ENCODE measurements at regions of chr17 and their contacts with region 1.

Region 1: DNA sequence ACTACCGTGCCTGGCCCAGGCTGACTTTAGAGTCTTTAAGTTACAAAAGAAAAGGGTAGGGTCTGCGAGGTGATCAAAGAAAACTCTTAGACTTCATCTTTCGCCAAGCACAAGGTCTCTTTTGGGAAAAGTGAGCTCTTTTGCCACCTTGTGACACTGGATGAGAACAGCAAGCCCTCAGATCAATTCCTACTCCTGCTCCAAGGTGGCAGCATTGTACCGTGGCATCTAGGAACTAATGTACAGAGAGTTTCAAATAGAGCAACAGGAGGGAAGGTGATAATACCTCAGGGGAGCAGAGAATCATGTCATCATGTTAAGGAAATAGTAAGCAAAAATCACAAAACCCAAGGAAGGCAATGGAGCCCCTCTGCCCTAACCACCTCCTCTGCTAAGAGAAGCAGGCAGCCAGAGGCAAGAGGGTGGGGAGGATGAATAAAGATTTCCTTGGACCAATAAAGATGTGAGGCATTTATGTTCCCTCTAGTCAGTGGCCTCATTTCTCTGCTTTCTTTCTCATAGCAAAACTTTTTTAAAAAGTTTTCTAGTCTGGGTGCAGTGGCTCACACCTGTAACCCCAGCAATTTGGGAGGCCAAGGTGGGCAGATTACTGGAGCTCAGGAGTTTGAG is 2.1 kb upstream of the C17orf78 start:
- DNase-seq: peak; percentile 66 to 67
- H3K4me3 ChIP-seq: no peak overlapping the region
- H3K27ac ChIP-seq: no peak overlapping the region
- H3K4me1 ChIP-seq: no peaks in the 10 kb centered on the region; a peak in 1 of 7 replicates
- H3K27me3 ChIP-seq: no peaks in the 10 kb centered on the region
- CTCF ChIP-seq: peak; percentile 69 to 100 (median 100)
- EP300 ChIP-seq: no peak
- POLR2A ChIP-seq: no peak
- RAD21 ChIP-seq: peak; percentile 99

Region 2: DNA sequence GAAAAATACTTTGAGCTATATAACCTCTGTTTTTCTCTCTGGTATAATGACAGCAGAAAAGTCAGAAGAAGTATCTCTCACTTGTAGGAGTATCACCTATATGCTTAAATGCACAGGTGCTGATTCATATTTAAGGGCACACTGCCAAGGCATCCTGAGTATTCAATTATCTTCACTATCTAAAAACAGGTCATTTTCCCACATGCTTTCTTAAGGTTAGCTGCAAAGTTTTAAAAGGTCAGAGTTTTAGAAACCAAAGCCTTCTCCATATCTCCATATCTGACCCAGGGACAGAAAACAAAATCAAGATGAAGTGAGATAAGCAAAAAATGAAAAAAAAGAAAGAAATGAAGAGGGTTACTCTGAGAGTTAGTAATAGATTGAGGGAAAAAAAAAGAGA is 97.1 kb before region 1 on chr17:
- CTCF ChIA-PET with region 1: interaction called, 10 read pairs
- POLR2A ChIA-PET with region 1: no interaction called
- DNase-seq: no peak
- H3K4me3 ChIP-seq: no peak overlapping the region
- H3K27ac ChIP-seq: no peak overlapping the region
- H3K4me1 ChIP-seq: no peaks in the 10 kb centered on the region
- H3K27me3 ChIP-seq: no peaks in the 10 kb centered on the region
- CTCF ChIP-seq: no peak
- EP300 ChIP-seq: no peak
- POLR2A ChIP-seq: no peak
- RAD21 ChIP-seq: no peak

Region 3: DNA sequence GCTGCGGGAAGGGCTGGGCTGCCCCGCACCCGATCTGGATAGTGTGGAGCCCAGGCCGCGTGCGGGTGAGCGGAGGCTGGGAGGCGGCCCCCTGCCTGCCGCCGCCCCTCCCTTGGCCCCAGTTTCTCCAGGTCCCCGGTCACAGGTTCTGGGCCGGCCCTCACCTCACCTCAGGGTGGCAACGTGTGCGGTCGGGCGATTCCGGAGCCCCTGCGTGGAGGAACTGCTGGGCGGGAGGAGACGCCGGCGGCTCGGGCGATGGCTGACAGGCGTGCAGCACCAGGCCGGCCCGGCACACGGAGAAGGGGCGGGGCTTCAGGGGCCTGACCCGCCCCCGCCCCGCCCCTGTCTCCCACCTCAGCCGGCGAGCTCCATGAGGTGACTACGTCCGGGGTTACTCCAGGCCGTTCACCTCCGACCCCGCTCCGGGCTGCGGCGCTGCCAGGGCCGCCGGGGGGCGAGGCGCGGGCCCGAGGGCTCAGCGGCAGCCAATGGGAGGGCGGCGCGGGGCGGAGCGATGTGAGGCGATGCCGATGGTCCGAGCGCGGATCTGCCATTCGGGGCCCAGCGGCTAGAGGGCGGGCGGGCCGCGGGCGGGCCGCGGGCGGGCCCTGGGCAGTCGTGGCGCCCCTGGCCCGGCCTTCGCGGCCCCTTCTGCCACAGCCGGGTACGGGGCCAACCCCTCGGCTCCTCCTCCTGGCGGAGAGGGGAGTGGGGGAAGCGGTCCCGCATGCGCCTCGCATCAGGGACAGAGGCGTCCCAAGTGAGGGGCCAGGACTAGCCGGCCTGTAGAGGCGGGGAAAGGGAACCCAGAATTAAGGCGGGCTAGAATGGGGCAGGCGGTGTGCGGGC is 14.6 kb before region 1 on chr17:
- CTCF ChIA-PET with region 1: interaction called, 21 read pairs
- POLR2A ChIA-PET with region 1: interaction called, 15 read pairs
- DNase-seq: peak; percentile 96
- H3K4me3 ChIP-seq: peak overlapping the region; percentile 83 to 95 (median 88)
- H3K27ac ChIP-seq: peak overlapping the region; percentile 69
- H3K4me1 ChIP-seq: peaks cover 0 to 12% (median 7%) of the 10 kb centered on the region in 4 experiments; a peak in 6 of 7 replicates
- H3K27me3 ChIP-seq: no peaks in the 10 kb centered on the region
- CTCF ChIP-seq: peak in 2 of 3 experiments; percentile 32 to 34; a peak in 2 of 4 replicates
- EP300 ChIP-seq: no peak
- POLR2A ChIP-seq: peak in 1 of 2 experiments; percentile 64; a peak in 1 of 3 replicates
- RAD21 ChIP-seq: peak in 1 of 2 experiments; percentile 21; a peak in 2 of 4 replicates

Region 4: DNA sequence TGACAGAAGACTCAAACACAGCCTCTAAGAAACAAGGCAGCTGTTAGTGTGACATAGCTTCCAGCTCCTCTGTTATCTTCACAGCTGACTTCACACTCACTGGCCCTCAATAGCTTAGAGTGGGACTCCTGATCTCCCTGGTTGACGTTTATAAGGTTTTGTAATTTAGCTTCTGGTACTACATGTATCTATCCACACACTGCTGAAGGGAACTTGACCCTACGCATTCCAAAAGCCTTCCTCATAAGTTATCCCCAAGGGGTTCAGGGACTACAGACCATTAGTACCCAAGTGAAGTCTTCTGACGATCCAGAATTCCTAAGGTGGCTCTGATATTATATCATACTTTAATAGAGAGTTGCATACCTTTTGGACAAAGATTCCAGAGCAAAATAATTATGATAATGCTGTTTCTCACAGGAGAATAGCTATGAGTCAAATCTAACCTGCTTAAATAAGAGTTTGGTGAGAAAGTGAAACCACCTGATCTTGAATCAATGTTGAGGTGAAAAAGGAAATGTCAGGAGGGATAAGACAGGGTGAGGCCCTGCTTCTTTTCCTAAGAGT is 18.5 kb after region 1 on chr17:
- CTCF ChIA-PET with region 1: interaction called, 126 read pairs
- POLR2A ChIA-PET with region 1: interaction called, 3 read pairs
- DNase-seq: no peak
- H3K4me3 ChIP-seq: no peak overlapping the region
- H3K27ac ChIP-seq: no peak overlapping the region
- H3K4me1 ChIP-seq: no peaks in the 10 kb centered on the region
- H3K27me3 ChIP-seq: no peaks in the 10 kb centered on the region
- CTCF ChIP-seq: no peak
- EP300 ChIP-seq: no peak
- POLR2A ChIP-seq: no peak
- RAD21 ChIP-seq: no peak

Region 5: GRCh38 chr17:37438141-37438540 is 64.5 kb after region 1 on chr17:
- CTCF ChIA-PET with region 1: interaction called, 18 read pairs
- POLR2A ChIA-PET with region 1: no interaction called
- DNase-seq: no peak
- H3K4me3 ChIP-seq: no peak overlapping the region
- H3K27ac ChIP-seq: no peak overlapping the region
- H3K4me1 ChIP-seq: no peaks in the 10 kb centered on the region
- H3K27me3 ChIP-seq: no peaks in the 10 kb centered on the region
- CTCF ChIP-seq: peak in 2 of 3 experiments; percentile 10 to 55; a peak in 2 of 4 replicates
- EP300 ChIP-seq: no peak
- POLR2A ChIP-seq: no peak
- RAD21 ChIP-seq: no peak

Region 6: GRCh38 chr17:37541880-37542660 is 168.4 kb after region 1 on chr17:
- CTCF ChIA-PET with region 1: no interaction called
- POLR2A ChIA-PET with region 1: no interaction called
- DNase-seq: no peak
- H3K4me3 ChIP-seq: no peak overlapping the region
- H3K27ac ChIP-seq: no peak overlapping the region
- H3K4me1 ChIP-seq: peaks cover 0 to 9% (median 2%) of the 10 kb centered on the region in 4 experiments; a peak in 3 of 7 replicates
- H3K27me3 ChIP-seq: no peaks in the 10 kb centered on the region
- CTCF ChIP-seq: no peak
- EP300 ChIP-seq: no peak
- POLR2A ChIP-seq: no peak
- RAD21 ChIP-seq: no peak